ENCODE measurements at regions of chr9 and their contacts with region 1.

Region 1: DNA sequence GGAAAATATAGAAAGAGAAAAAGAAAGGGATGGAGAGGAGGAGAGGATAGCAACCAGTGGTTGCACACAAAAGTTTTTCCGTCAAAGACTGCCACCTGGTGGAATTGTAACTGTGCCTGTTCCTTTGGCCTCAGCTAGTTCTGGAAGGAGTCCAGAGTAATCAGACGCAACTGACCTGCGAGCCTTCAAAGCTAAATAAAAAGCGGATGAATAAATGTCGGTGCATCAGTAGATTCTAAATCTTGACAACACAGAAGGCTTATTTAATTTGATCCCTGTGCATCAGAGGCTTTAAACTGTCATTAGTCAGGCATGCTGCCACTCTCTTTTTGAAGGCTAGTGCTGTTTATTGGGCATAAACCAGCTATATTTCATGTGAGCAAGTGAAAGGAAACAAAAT is 132.9 kb upstream of the ACO1 start:
- DNase-seq: peak in 21 of 35 experiments; percentile 2 to 49 (median 11)
- ATAC-seq: no peak
- H3K4me3 ChIP-seq: no peak overlapping the region
- H3K4me3 Mint-ChIP-seq: no peak overlapping the region
- H3K27ac ChIP-seq: no peak overlapping the region
- H3K27ac Mint-ChIP-seq: no peak overlapping the region
- H3K4me1 ChIP-seq: no peaks in the 10 kb centered on the region
- H3K4me1 Mint-ChIP-seq: no peaks in the 10 kb centered on the region
- H3K27me3 ChIP-seq: no peaks in the 10 kb centered on the region
- H3K27me3 Mint-ChIP-seq: peaks cover 2 to 7% of the 10 kb centered on the region in 2 donors

Region 2: DNA sequence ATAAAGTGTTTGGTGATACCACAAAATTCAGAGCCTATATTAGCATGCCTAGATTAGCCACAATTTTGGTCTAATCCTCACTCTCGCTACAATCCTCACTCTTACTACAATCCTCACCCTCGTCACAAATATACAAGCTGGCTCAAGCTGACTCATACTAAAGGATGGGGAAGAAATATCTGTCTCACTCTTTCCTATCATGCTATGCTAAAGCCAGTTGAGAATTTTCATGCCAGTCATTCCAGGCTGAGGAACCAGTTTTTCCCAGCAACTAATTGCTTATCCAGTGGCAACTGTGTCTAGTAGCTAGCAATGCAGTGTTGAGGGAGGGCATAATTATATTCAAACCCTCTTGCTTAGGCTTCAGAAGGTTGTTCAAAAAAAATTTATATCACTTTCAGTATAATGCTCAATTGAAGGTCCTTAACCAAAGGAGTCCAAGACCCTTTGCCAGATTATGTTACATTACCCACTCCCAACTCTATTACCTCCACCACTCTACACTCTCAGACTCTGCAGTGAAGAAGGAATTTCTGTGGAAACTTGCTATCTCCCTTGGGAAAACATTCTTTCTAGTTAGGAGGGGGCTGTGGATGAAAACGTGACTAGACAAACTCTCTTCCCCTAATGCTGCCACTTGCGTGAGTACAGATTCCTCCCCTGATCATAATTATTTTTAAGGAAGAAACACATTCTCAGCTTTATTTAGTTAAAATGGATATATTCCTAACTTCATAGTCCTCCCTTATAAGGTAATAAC is 677.4 kb before region 1 on chr9:
- CTCF ChIA-PET with region 1: no interaction called
- POLR2A ChIA-PET with region 1: no interaction called
- DNase-seq: no peak
- ATAC-seq: no peak
- H3K4me3 ChIP-seq: no peak overlapping the region
- H3K4me3 Mint-ChIP-seq: no peak overlapping the region
- H3K27ac ChIP-seq: no peak overlapping the region
- H3K27ac Mint-ChIP-seq: no peak overlapping the region
- H3K4me1 ChIP-seq: no peaks in the 10 kb centered on the region
- H3K4me1 Mint-ChIP-seq: peaks cover 0 to 8% (median 6%) of the 10 kb centered on the region in 3 donors
- H3K27me3 ChIP-seq: no peaks in the 10 kb centered on the region
- H3K27me3 Mint-ChIP-seq: no peaks in the 10 kb centered on the region

Region 3: DNA sequence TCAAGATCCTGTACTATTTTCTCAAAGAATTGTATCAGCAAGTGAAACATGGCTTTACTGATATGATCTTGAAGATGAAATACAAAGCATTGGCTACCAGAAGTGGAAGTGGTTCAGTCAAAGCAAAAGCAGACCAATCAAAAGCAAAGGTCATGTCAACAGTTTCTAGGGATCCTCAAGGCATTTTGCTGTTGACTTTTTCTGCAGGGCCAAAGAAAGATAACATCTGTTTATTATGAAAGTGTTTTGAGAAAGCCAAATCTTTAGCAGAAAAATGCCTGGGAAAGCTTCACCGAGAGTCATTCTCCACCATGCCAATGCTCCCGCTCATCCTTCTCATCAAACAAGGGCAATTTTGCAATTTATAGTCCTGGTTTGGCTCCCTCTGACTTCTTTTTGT is 42.6 kb after region 1 on chr9:
- CTCF ChIA-PET with region 1: no interaction called
- POLR2A ChIA-PET with region 1: interaction called in 1 of 2 experiments, 11 read pairs
- DNase-seq: no peak
- ATAC-seq: no peak
- H3K4me3 ChIP-seq: no peak overlapping the region
- H3K4me3 Mint-ChIP-seq: no peak overlapping the region
- H3K27ac ChIP-seq: no peak overlapping the region
- H3K27ac Mint-ChIP-seq: no peak overlapping the region
- H3K4me1 ChIP-seq: no peaks in the 10 kb centered on the region
- H3K4me1 Mint-ChIP-seq: no peaks in the 10 kb centered on the region
- H3K27me3 ChIP-seq: peaks cover 0 to 10% of the 10 kb centered on the region in 2 experiments
- H3K27me3 Mint-ChIP-seq: peaks cover 24 to 27% of the 10 kb centered on the region in 2 donors

Region 4: GRCh38 chr9:32413424-32413823 is 161.9 kb after region 1 on chr9:
- CTCF ChIA-PET with region 1: no interaction called
- POLR2A ChIA-PET with region 1: no interaction called
- DNase-seq: no peak
- ATAC-seq: no peak
- H3K4me3 ChIP-seq: no peak overlapping the region
- H3K4me3 Mint-ChIP-seq: no peak overlapping the region
- H3K27ac ChIP-seq: no peak overlapping the region
- H3K27ac Mint-ChIP-seq: no peak overlapping the region
- H3K4me1 ChIP-seq: no peaks in the 10 kb centered on the region
- H3K4me1 Mint-ChIP-seq: no peaks in the 10 kb centered on the region
- H3K27me3 ChIP-seq: no peaks in the 10 kb centered on the region
- H3K27me3 Mint-ChIP-seq: no peaks in the 10 kb centered on the region

Measured in T-cell (primary cell).